ENCODE measurements at regions of chr12 and their contacts with region 1.

Region 1: GRCh38 chr12:58919231-58920101 is 838 bp downstream of the LRIG3 start:
- DNase-seq: no peak
- H3K4me3 ChIP-seq: peak overlapping the region; percentile 78 to 98 (median 83)
- H3K27ac ChIP-seq: peak overlapping the region; percentile 97 to 99 (median 98)
- H3K4me1 ChIP-seq: peaks cover 5 to 55% (median 20%) of the 10 kb centered on the region in 3 donors
- H3K27me3 ChIP-seq: no peaks in the 10 kb centered on the region
- CTCF ChIP-seq: no peak
- POLR2A ChIP-seq: peak in 1 of 4 donors; percentile 16

Region 2: GRCh38 chr12:59041241-59042121 is 122.0 kb after region 1 on chr12:
- intact Hi-C with region 1: loop called (anchors 10 kb)
- DNase-seq: no peak
- H3K4me3 ChIP-seq: peak overlapping the region in 1 of 4 donors; percentile 29
- H3K27ac ChIP-seq: peak overlapping the region; percentile 57 to 80 (median 78)
- H3K4me1 ChIP-seq: peaks cover 17 to 70% (median 29%) of the 10 kb centered on the region in 3 donors
- H3K27me3 ChIP-seq: no peaks in the 10 kb centered on the region
- CTCF ChIP-seq: no peak
- POLR2A ChIP-seq: no peak

Measured in esophagus squamous epithelium (tissue), 5 donors.